CD8-positive, alpha-beta memory T cell (primary cell): ENCODE measurements at regions of chr2 and their contacts with region 1.

Region 1: DNA sequence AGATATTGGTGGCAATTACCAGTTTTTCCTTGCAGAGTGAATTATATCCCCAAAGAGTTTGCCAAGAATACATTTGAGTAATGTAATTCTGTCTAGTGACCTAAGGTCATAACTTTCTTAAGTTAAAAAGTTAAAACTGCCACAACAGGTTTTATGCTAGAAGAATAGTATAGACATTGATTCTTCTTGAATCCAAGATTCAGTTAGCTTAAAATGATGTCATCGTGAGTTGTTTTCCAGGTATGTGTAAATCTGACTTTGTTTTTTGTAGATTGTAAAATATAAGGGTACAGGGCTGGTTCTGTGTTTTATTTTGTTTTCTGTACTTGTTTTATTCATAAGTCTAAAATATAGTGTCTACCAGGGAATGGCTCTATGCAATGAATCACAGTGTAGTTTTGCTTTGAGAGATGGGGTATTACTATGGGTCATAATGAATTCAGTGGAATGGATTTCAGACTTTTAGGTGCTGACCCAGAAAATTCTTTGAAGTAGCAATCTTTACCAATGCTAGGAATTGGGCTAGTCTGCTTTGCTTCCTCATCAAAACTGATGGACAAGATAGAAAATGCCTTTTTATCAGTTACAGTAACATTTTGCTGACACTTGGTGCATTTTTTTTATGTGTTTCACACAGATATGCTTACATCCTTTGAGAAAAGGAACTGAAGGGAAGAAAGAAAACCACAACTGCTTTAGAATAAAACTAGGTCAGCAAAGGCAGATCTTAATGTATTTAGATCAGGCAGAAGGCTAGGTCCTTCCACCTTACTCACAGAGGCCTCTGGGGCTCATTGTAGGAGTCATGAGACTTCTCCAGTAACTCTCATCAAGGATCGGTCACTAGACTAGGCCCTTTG is 20.8 kb upstream of the MGAT5 start:
- DNase-seq: peak in 2 of 5 donors; percentile 46 to 64
- H3K4me3 ChIP-seq: peak overlapping the region; percentile 11
- H3K4me3 Mint-ChIP-seq: peak overlapping the region; percentile 49 to 88 (median 70)
- H3K27ac ChIP-seq: peak overlapping the region; percentile 26
- H3K27ac Mint-ChIP-seq: peak overlapping the region; percentile 72 to 98 (median 90)
- H3K4me1 ChIP-seq: peaks cover 63% of the 10 kb centered on the region
- H3K4me1 Mint-ChIP-seq: peaks cover 86 to 94% (median 90%) of the 10 kb centered on the region in 3 donors
- H3K27me3 ChIP-seq: no peaks in the 10 kb centered on the region
- H3K27me3 Mint-ChIP-seq: no peaks in the 10 kb centered on the region

Region 2: DNA sequence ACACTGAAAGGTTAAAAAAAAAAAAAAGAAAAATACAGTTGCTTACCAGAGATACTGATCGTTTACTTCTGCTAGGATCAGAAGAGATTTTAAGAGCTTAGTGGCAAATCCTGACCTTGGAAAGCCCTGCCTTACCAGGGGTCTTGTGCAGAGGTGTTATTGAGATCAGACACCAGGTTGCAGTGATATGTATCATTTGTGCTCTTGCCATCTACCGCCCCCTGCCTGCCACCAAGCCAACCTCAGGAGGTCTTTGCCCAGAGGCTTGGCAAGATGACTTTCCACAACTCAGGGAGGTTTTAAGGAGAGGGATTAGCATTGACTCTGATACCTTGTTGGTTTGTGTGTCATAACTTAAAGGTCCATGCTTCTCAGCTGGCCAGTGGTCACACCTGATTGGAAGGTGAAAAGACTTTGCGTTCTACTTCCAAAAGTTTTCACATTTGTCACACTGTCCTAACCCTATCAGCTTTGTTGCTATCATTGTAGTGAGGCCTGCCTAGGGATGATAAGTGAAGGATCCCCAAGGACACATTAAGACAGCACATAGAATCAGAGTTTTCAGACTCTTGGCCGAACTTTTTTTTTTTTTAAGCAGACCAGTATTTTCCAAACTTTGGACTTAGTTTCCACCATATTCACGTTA is 25.4 kb before region 1 on chr2:
- CTCF ChIA-PET with region 1: interaction called, 11 read pairs
- POLR2A ChIA-PET with region 1: no interaction called
- DNase-seq: peak; percentile 45 to 73 (median 47)
- H3K4me3 ChIP-seq: no peak overlapping the region
- H3K4me3 Mint-ChIP-seq: peak overlapping the region in 1 of 7 donors; percentile 23
- H3K27ac ChIP-seq: no peak overlapping the region
- H3K27ac Mint-ChIP-seq: peak overlapping the region; percentile 6 to 66 (median 28)
- H3K4me1 ChIP-seq: peaks cover 34% of the 10 kb centered on the region
- H3K4me1 Mint-ChIP-seq: peaks cover 13 to 15% (median 15%) of the 10 kb centered on the region in 3 donors
- H3K27me3 ChIP-seq: no peaks in the 10 kb centered on the region
- H3K27me3 Mint-ChIP-seq: no peaks in the 10 kb centered on the region

Region 3: GRCh38 chr2:134218930-134219658 is 14.0 kb before region 1 on chr2:
- CTCF ChIA-PET with region 1: interaction called, 12 read pairs
- POLR2A ChIA-PET with region 1: interaction called, 6 read pairs
- DNase-seq: peak; percentile 6 to 63 (median 37)
- H3K4me3 ChIP-seq: peak overlapping the region; percentile 29
- H3K4me3 Mint-ChIP-seq: peak overlapping the region in 6 of 7 donors; percentile 67 to 82 (median 76)
- H3K27ac ChIP-seq: no peak overlapping the region
- H3K27ac Mint-ChIP-seq: peak overlapping the region; percentile 72 to 96 (median 92)
- H3K4me1 ChIP-seq: peaks cover 43% of the 10 kb centered on the region
- H3K4me1 Mint-ChIP-seq: peaks cover 60 to 88% (median 71%) of the 10 kb centered on the region in 3 donors
- H3K27me3 ChIP-seq: no peaks in the 10 kb centered on the region
- H3K27me3 Mint-ChIP-seq: peaks cover 0 to 2% of the 10 kb centered on the region in 2 donors